CD4-positive, alpha-beta memory T cell (primary cell): ENCODE measurements at regions of chr1 and their contacts with region 1.

Region 1: DNA sequence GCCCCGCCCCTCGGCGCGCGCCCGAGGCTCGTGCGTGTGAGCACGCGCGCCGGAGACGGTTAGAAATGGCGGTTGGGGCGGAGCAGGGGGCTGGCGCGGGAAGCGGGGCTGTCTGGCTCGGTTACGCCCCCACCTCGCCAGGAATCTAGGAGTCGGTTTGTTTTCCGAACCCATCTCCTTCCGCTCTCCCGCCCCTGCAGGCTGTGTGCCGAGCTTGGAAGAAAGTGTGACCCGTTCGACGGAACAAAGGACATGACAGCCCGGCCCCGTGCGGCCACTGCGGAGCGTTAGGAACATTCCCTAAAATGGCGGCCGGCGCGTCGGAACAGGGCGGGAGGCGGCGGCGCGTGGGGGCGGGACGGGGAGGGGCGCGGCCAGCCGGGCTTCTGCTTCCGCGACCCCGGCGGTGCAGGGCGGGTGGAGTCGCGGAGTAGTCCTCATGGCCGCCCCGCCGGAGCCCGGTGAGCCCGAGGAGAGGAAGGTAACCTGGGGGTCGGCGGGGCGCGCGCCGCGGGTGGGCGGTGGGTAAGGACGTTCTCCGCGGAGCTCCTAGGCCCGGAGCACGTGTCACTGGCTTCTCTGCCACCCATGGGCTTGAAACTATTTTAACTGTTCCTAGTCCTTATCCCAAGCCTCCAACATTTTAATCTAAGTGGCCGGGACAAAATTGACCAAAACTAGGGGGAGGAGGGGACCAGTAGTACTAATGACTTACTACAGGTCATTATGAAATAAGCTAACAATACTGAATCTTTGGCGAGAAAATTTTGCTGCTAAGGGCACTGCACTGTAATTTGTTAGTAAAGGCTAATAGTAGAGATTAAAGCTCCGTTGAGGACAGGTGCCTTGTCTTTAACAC is at the start of gene COX20:
- DNase-seq: peak; percentile 89 to 96 (median 94)
- H3K4me3 ChIP-seq: peak within 1 kb of the TSS; percentile 74 to 87
- H3K4me3 Mint-ChIP-seq: peak within 1 kb of the TSS; percentile 89 to 98 (median 96)
- H3K27ac ChIP-seq: peak within 1 kb of the TSS; percentile 94
- H3K27ac Mint-ChIP-seq: peak within 1 kb of the TSS; percentile 93 to 100 (median 99)
- H3K4me1 ChIP-seq: peaks cover 52% of the 10 kb centered on the region
- H3K4me1 Mint-ChIP-seq: peaks cover 35 to 67% (median 42%) of the 10 kb centered on the region in 4 donors
- H3K27me3 ChIP-seq: no peaks in the 10 kb centered on the region
- H3K27me3 Mint-ChIP-seq: no peaks in the 10 kb centered on the region
- total RNA-seq, gene COX20: 31.3 to 32.9 TPM

Region 2: GRCh38 chr1:244451951-244452795 is 383.3 kb before region 1 on chr1:
- CTCF ChIA-PET with region 1: no interaction called
- POLR2A ChIA-PET with region 1: interaction called, 18 read pairs
- intact Hi-C with region 1: loop called (anchors 1 kb)
- DNase-seq: peak; percentile 98 to 99 (median 99)
- H3K4me3 ChIP-seq: peak overlapping the region in 1 of 2 donors; percentile 95
- H3K4me3 Mint-ChIP-seq: peak overlapping the region; percentile 87 to 97 (median 92)
- H3K27ac ChIP-seq: peak overlapping the region; percentile 94
- H3K27ac Mint-ChIP-seq: peak overlapping the region; percentile 87 to 100 (median 95)
- H3K4me1 ChIP-seq: peaks cover 39% of the 10 kb centered on the region
- H3K4me1 Mint-ChIP-seq: peaks cover 31 to 48% (median 35%) of the 10 kb centered on the region in 4 donors
- H3K27me3 ChIP-seq: no peaks in the 10 kb centered on the region
- H3K27me3 Mint-ChIP-seq: no peaks in the 10 kb centered on the region

Region 3: GRCh38 chr1:244652699-244653466 is 182.6 kb before region 1 on chr1 and contains the start of gene DESI2:
- CTCF ChIA-PET with region 1: no interaction called
- POLR2A ChIA-PET with region 1: interaction called, 35 read pairs
- intact Hi-C with region 1: loop called (anchors 1 kb)
- DNase-seq: peak; percentile 97 to 100 (median 99)
- H3K4me3 ChIP-seq: peak within 1 kb of the TSS; percentile 61 to 73
- H3K4me3 Mint-ChIP-seq: peak within 1 kb of the TSS; percentile 80 to 91 (median 86)
- H3K27ac ChIP-seq: peak within 1 kb of the TSS; percentile 89
- H3K27ac Mint-ChIP-seq: peak within 1 kb of the TSS; percentile 43 to 95 (median 93)
- H3K4me1 ChIP-seq: peaks cover 43% of the 10 kb centered on the region
- H3K4me1 Mint-ChIP-seq: peaks cover 21 to 24% (median 22%) of the 10 kb centered on the region in 4 donors
- H3K27me3 ChIP-seq: no peaks in the 10 kb centered on the region
- H3K27me3 Mint-ChIP-seq: no peaks in the 10 kb centered on the region
- total RNA-seq, gene DESI2: 21.1 to 22.8 TPM

Region 4: DNA sequence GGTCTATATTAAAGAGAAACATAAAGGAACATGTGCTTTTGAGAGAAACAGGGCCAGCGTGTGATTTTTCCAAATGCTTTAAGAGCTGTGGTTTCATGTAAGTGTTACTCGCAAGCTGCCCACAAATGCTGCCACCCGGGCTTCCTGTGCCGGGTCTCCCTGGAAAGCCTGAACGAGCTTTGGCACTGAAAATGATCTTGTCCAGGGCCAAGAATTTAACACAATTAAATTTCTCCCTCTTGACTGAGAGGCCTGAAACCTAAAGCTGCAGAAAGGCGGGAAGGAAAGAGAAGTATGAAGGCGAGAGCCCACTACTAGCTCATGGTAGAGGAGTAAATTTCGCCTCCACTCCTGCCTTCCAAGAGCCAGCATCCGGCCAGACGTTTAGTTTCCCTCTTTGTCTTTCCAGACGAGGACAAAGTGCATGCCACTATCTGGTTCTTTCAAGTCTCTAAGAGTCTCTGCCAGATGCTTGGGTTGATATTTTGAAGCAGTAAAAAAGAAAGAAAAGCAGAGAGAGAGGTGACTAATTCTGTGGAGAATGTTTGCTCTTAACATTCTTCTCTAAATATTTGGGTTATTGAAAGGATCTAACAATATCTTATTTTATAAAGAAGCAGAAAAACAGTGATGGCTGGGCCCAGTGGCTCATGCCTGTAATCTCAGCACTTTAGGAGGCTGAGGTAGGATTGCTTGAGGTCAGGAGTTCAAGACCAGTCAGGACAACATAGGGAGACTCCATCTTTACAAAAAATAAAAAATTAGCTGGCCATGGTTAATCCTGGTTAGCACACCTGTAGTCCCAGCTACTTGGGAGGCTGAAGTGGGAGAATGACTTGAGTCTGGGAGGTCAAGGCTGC is 128.8 kb after region 1 on chr1:
- CTCF ChIA-PET with region 1: interaction called, 6 read pairs
- POLR2A ChIA-PET with region 1: interaction called, 285 read pairs
- intact Hi-C with region 1: no loop called
- DNase-seq: peak in 1 of 5 donors; percentile 12
- H3K4me3 ChIP-seq: no peak overlapping the region
- H3K4me3 Mint-ChIP-seq: peak overlapping the region in 5 of 8 donors; percentile 6 to 52 (median 28)
- H3K27ac ChIP-seq: no peak overlapping the region
- H3K27ac Mint-ChIP-seq: peak overlapping the region; percentile 49 to 83 (median 74)
- H3K4me1 ChIP-seq: peaks cover 25% of the 10 kb centered on the region
- H3K4me1 Mint-ChIP-seq: peaks cover 13 to 23% (median 21%) of the 10 kb centered on the region in 4 donors
- H3K27me3 ChIP-seq: no peaks in the 10 kb centered on the region
- H3K27me3 Mint-ChIP-seq: no peaks in the 10 kb centered on the region

Region 5: DNA sequence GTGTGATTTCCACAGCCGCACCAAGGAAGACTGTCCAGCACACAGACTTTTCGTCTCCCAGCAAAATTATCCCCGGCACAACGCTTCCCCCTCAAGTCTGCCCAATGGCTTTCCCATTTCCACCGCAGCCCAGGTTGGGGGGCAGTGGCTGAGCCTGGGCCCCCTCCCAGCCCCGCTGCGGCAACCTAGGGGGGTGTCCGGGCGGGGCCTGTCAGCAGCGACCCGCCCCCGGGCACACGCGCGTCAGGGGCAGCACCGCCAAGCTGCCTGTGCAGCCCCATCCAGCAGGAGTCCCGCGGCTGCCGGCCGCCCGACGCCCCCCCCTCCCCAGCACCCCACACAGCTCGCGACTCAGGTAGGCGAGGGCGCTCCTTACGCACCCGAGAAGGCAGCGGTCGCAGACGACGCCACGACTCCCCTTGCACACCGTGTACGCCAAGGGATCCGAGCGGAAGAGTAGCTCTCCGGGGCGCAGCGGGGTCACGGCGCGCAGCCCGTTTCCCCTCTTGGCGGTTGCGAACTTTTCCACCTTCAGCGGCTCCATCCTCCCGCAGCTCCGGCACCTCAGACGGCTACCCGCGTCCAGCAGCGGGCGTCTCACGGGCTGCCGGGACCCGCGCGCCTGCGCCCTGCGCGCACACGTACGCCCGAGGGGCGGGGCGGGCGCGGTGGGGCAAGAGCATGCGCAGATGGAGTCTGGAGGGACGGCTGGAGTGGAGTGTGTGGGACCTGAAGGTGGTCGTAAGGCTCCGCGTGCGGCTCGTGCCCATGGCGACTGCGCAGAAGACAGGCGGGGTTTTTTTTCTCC is 1671.4 kb after region 1 on chr1 and contains the start of gene SMYD3:
- CTCF ChIA-PET with region 1: no interaction called
- POLR2A ChIA-PET with region 1: no interaction called
- intact Hi-C with region 1: loop called (anchors 2 kb)
- DNase-seq: peak; percentile 74 to 82 (median 77)
- H3K4me3 ChIP-seq: peak within 1 kb of the TSS; percentile 70 to 74
- H3K4me3 Mint-ChIP-seq: peak within 1 kb of the TSS; percentile 86 to 98 (median 95)
- H3K27ac ChIP-seq: peak within 1 kb of the TSS; percentile 48
- H3K27ac Mint-ChIP-seq: peak within 1 kb of the TSS; percentile 69 to 96 (median 93)
- H3K4me1 ChIP-seq: peaks cover 14% of the 10 kb centered on the region
- H3K4me1 Mint-ChIP-seq: peaks cover 20 to 40% (median 29%) of the 10 kb centered on the region in 4 donors
- H3K27me3 ChIP-seq: no peaks in the 10 kb centered on the region
- H3K27me3 Mint-ChIP-seq: no peaks in the 10 kb centered on the region
- total RNA-seq, gene SMYD3: 19.5 to 19.7 TPM